ENCODE measurements at regions of chr4 and their contacts with region 1.

Region 1: GRCh38 chr4:15451866-15452765 is 17.6 kb upstream of the CC2D2A start:
- DNase-seq: peak; percentile 94
- H3K4me3 ChIP-seq: peak overlapping the region; percentile 29
- H3K27ac ChIP-seq: peak overlapping the region; percentile 62
- H3K4me1 ChIP-seq: peaks cover 37% of the 10 kb centered on the region
- H3K27me3 ChIP-seq: no peaks in the 10 kb centered on the region

Region 2: DNA sequence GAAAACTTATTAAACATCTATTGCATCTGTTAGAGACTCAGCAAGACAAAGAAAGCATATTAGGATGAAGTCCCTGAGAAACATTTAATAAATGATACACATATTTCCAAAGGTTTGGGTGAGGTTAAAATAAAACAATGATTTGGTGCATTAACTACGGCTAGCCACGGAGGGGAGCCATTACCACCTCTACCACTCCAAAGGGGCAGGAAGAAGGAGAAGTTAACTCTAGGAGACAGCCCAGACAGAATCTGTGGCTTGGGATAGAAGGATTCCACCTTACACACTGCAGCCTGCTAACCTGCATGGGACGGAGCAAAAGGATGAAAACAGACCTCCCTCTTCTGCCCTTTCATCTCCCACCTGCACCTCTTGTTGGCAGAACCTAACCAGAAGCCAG is 213.4 kb before region 1 on chr4:
- in situ Hi-C with region 1: loop called (anchors 5 kb)
- DNase-seq: peak; percentile 71
- H3K4me3 ChIP-seq: no peak overlapping the region
- H3K27ac ChIP-seq: no peak overlapping the region
- H3K4me1 ChIP-seq: peaks cover 21% of the 10 kb centered on the region
- H3K27me3 ChIP-seq: peaks cover 40% of the 10 kb centered on the region

Measured in GM23248 (cell line).